ENCODE measurements at regions of chr7 and their contacts with region 1.

Region 1: DNA sequence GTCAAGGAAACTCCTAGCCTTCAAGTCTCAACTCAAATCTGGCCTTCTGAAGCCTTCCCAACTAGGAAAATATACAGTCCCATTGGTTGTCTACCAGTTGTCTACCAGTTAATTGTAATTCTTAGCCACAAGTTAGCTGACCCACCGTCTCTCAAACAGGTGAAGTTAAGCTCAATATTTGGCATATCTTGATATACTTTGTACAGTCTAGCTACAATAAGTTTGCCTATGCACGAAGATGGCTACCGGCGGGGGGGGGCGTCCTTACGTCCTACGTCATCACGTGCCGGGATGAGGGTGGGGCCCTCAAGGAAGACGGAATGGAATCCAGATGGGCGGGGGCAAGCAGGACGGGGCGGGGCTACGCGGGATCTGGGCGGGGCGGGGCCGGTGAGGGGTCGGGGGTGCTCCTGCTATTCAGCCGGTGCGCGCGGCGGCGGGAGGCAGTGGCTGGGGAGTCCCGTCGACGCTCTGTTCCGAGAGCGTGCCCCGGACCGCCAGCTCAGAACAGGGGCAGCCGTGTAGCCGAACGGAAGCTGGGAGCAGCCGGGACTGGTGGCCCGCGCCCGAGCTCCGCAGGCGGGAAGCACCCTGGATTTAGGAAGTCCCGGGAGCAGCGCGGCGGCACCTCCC is at the start of gene AHR:
- DNase-seq: peak; percentile 94
- ATAC-seq: peak; percentile 85
- H3K4me3 Mint-ChIP-seq: peak within 1 kb of the TSS; percentile 87
- H3K27ac Mint-ChIP-seq: peak within 1 kb of the TSS; percentile 96
- H3K4me1 Mint-ChIP-seq: peaks cover 19% of the 10 kb centered on the region
- H3K27me3 Mint-ChIP-seq: no peaks in the 10 kb centered on the region
- total RNA-seq, gene AHR: 36.7 to 42.3 TPM

Region 2: DNA sequence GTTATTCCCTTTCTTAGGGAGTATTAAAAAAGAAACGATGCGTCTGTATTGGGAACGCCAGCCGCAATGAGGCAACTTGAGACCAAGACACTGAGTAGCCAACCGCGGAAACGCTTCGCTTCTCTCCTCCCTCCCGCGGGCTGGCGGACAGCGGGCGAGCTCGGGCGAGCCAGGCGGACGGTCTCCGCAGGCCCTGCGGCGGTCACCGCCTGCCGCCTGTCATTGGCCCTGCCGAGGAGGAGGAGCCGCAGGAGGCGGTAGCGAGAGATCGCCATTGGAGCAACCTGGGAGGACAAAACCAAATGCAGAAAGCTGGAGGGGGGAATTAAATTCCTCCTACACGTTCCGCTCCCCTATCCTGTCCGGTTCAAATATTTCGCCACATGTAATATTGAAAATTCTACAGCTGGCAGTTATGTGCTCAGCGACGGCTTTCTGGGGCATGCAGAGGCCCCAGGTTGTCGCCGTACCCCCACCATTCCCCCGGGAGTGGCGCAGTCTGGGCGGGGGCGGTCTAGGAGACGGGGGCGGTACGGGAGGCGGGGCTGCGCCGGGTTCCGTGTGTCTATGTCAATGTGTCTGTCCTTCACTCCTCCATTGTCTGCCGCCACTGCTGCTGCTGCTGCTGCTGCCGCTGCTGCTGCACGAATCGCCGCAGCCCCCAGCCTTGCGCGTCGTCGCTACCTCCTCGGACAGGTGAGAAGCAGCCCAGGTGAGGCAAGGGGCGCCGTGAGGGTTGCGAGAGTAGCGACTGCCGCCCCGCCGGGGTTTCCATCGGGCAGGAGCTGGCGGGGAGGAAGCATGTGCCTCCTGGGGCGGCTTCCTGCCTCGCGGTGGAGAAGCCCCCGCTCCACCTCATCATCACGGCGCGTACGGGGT is 652.5 kb before region 1 on chr7 and contains the starts of genes ANKMY2 and BZW2:
- CTCF ChIA-PET with region 1: no interaction called
- POLR2A ChIA-PET with region 1: no interaction called
- intact Hi-C with region 1: loop called (anchors 1 to 5 kb)
- DNase-seq: peak; percentile 95
- ATAC-seq: peak; percentile 90
- H3K4me3 Mint-ChIP-seq: peak within 1 kb of the TSS; percentile 98
- H3K27ac Mint-ChIP-seq: peak within 1 kb of the TSS; percentile 99
- H3K4me1 Mint-ChIP-seq: peaks cover 48% of the 10 kb centered on the region
- H3K27me3 Mint-ChIP-seq: no peaks in the 10 kb centered on the region
- total RNA-seq, gene ANKMY2: 9.0 to 10.1 TPM
- total RNA-seq, gene BZW2: 106 to 113 TPM

Region 3: DNA sequence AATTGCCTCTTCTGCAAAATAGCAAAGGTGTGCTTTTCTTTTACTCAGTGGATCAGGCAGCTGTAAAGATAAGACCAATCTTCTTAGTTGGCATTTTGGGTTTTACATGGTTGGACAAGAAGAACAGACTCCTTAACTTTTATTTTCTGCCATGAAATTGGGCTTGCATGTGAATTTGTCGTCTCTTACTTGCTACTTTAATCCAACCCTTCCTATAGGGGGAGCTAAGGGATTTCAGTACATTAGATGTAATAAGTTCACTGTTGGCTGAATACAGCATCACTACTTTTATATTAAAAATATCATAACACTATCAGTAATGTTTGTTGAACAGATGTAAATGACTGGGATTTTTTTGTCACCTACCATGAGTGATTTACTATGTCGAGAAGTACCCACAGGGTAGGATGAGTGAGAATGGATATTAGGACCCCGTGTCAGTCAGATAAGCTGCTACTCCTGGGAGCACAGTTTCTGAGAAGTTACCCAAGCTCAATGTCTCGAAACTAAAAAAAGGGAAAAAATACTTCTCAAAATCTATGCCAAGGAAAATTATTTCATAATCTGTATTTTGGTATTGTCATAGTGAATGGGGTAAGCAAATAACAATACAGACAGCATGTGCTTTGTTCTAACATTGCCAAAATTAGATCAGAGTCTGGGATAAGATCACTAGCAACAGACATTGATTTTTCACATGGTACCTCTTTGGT is 289.2 kb before region 1 on chr7:
- CTCF ChIA-PET with region 1: interaction called, 3 read pairs
- POLR2A ChIA-PET with region 1: no interaction called
- intact Hi-C with region 1: loop called in 1 of 2 experiments (anchors 2 kb)
- DNase-seq: no peak
- ATAC-seq: peak; percentile 58
- H3K4me3 Mint-ChIP-seq: no peak overlapping the region
- H3K27ac Mint-ChIP-seq: no peak overlapping the region
- H3K4me1 Mint-ChIP-seq: peaks cover 15% of the 10 kb centered on the region
- H3K27me3 Mint-ChIP-seq: peaks cover 2% of the 10 kb centered on the region

Region 4: GRCh38 chr7:17139081-17139480 is 159.2 kb before region 1 on chr7:
- CTCF ChIA-PET with region 1: interaction called, 5 read pairs
- POLR2A ChIA-PET with region 1: interaction called, 8 read pairs
- intact Hi-C with region 1: loop called (anchors 1 to 2 kb)
- DNase-seq: no peak
- ATAC-seq: peak; percentile 83
- H3K4me3 Mint-ChIP-seq: no peak overlapping the region
- H3K27ac Mint-ChIP-seq: peak overlapping the region; percentile 91
- H3K4me1 Mint-ChIP-seq: peaks cover 74% of the 10 kb centered on the region
- H3K27me3 Mint-ChIP-seq: no peaks in the 10 kb centered on the region

Region 5: DNA sequence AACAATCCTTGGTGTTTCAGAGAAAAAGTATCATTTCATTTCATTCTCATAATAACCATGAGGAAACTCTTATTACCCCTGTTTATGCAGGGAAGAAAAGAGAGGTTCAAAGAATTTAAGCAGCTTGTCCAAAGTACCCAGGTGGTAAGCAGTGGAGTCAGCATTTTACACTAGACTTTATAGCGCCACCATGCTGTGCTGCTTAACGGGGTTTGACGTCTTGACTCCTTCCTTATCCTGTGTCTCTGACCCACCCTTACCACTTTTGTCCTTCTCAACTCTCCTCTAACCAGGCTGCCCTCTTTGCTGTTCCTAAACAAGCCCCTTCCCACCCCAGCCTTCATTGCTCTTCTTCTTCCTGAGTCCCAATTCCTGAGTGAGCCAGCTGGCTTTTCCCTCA is 116.8 kb before region 1 on chr7:
- CTCF ChIA-PET with region 1: no interaction called
- POLR2A ChIA-PET with region 1: no interaction called
- intact Hi-C with region 1: no loop called
- DNase-seq: no peak
- ATAC-seq: no peak
- H3K4me3 Mint-ChIP-seq: no peak overlapping the region
- H3K27ac Mint-ChIP-seq: no peak overlapping the region
- H3K4me1 Mint-ChIP-seq: peaks cover 15% of the 10 kb centered on the region
- H3K27me3 Mint-ChIP-seq: no peaks in the 10 kb centered on the region

Region 6: DNA sequence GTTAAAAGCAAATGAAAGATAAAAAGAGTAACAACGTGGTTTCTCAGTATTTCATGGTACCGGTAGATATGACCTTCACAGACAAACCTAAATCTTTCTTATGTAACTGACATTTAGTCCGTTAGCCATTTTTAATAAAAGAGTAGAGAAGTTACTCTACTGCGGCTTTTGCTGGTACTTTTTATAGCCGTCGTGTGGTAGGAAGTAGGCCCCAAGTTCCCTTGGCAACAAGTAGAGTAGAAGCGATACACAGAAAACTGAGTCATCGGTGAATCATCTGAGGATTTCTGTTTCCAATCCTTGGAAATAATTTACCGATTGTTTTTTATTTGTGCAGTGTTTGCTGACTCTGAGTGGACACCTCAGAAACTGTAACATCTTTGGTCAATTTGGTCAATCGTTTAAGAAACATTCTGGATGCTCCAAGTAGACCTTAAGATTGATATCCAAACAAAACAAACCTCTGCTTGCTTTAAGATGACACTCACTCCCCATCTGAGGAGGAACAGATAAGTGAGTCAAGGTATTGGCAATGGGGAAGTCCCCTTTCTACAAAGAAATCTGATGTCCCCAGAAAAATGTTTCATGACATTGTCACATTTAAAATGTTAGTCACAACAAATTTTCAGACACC is 63.8 kb before region 1 on chr7:
- CTCF ChIA-PET with region 1: interaction called, 3 read pairs
- POLR2A ChIA-PET with region 1: no interaction called
- intact Hi-C with region 1: loop called (anchors 1 kb)
- DNase-seq: peak; percentile 76
- ATAC-seq: peak; percentile 88
- H3K4me3 Mint-ChIP-seq: peak overlapping the region; percentile 65
- H3K27ac Mint-ChIP-seq: peak overlapping the region; percentile 94
- H3K4me1 Mint-ChIP-seq: peaks cover 44% of the 10 kb centered on the region
- H3K27me3 Mint-ChIP-seq: no peaks in the 10 kb centered on the region

Region 7: DNA sequence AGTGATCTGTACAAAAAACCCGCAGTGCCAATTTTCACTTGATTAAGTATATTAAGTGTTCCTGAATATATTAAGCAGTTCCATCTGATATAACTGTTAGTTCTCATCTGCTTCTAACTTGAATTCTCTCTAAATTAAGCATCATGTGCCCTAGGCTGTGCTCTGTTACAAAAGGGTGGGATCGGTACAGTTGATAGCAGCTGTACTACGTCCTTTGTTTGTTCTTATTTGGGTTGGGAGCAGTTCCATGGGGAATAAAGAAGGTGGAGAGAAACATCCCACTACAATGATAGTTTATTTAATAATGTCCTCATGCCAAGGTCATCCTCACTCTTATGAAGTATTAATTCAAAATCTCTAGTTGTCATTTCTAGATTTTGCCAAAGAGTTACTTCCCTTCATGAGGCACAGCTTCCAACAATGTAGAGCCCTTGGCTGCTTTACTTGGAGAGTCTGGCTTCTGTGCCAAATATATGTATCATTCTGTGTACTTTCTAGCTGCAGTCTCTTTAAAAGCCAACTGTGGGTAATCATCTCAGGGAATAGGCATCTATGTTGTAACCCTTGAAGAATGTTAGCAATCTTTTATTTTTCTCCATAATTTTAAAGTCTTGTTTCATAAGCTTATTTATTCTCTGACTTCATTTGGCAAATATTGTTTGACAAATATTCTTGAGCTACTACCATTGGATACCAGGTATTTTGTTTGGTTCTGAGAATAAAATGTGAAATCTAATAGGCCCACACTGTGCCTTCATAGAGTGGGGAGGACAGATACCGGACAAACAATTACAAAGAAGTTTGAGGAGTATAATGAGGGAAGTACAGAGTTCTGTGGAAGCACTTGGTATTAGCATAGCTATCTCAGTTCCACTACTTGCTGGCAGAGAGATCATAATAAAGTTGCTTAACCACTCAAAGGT is 22.3 kb before region 1 on chr7:
- CTCF ChIA-PET with region 1: interaction called, 7 read pairs
- POLR2A ChIA-PET with region 1: interaction called, 3 read pairs
- intact Hi-C with region 1: loop called in 1 of 2 experiments (anchors 1 kb)
- DNase-seq: no peak
- ATAC-seq: no peak
- H3K4me3 Mint-ChIP-seq: no peak overlapping the region
- H3K27ac Mint-ChIP-seq: no peak overlapping the region
- H3K4me1 Mint-ChIP-seq: peaks cover 21% of the 10 kb centered on the region
- H3K27me3 Mint-ChIP-seq: no peaks in the 10 kb centered on the region

Region 8: DNA sequence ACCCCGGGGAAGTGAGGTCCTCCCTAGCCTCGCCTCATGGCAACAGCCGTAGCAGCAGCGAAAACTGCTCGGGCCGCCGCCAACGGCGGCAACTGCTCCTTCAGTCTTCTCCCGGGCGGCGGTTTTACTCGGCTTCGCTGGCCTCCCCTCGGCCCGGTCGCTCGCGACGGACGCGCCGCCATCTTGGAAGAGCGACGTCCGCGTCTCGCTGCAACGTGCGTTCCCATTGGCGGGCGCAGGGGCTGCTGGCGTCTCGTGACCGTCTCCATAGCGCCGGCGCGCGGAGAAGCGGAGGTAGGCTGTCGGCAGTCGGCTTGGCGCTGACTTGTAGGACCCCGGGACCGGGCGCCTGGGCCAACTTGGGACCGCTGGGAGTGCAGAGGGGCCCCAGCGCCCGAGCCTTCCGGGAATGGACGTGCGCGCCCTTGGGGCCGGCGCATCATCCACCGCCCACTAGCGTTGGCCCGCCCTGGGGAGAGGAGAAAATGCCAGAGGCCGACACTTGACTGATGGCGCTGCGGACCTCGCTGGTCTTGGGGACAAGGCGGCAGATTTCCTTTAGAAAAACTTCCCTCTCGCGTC is 642.1 kb after region 1 on chr7 and contains the start of gene SNX13:
- CTCF ChIA-PET with region 1: no interaction called
- POLR2A ChIA-PET with region 1: no interaction called
- intact Hi-C with region 1: loop called in 1 of 2 experiments (anchors 5 kb)
- DNase-seq: peak; percentile 95
- ATAC-seq: peak; percentile 92
- H3K4me3 Mint-ChIP-seq: peak within 1 kb of the TSS; percentile 89
- H3K27ac Mint-ChIP-seq: peak within 1 kb of the TSS; percentile 91
- H3K4me1 Mint-ChIP-seq: peaks cover 46% of the 10 kb centered on the region
- H3K27me3 Mint-ChIP-seq: no peaks in the 10 kb centered on the region
- total RNA-seq, gene SNX13: 23.9 to 25.5 TPM

Measured in activated CD4-positive, alpha-beta T cell treated with anti-CD3 and anti-CD28 coated beads for 36 hours (primary cell).